HEK293 (cell line): ENCODE measurements at regions of chr7 and their contacts with region 1.

Region 1: GRCh38 chr7:38335492-38336147 is 62.2 kb upstream of the TARP start:
- H3K4me3 ChIP-seq: no peak overlapping the region
- H3K27ac ChIP-seq: no peak overlapping the region
- H3K4me1 ChIP-seq: no peaks in the 10 kb centered on the region
- CTCF ChIP-seq: peak; percentile 77

Region 2: DNA sequence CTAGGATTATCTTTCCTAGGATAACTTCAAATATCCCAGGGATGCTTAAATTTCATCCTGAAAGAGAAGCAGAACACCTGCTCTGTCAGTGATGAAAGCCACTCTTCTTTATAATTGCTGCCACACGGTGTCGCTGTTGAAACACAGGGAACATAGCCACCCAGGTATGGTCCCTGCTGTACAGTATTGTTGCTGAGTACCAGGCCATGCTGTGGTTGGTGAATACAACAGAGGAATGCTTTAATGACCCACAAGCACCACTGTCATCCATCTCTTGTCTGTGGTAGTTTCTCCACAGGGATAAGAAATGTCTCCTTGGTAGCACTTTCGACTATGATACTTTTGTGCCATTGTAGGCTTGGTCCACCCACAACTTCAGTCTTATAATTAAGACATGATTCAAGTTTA is 228.1 kb before region 1 on chr7:
- CTCF ChIA-PET with region 1: interaction called, 28 read pairs
- POLR2A ChIA-PET with region 1: no interaction called
- H3K4me3 ChIP-seq: no peak overlapping the region
- H3K27ac ChIP-seq: no peak overlapping the region
- H3K4me1 ChIP-seq: no peaks in the 10 kb centered on the region
- CTCF ChIP-seq: no peak

Region 3: DNA sequence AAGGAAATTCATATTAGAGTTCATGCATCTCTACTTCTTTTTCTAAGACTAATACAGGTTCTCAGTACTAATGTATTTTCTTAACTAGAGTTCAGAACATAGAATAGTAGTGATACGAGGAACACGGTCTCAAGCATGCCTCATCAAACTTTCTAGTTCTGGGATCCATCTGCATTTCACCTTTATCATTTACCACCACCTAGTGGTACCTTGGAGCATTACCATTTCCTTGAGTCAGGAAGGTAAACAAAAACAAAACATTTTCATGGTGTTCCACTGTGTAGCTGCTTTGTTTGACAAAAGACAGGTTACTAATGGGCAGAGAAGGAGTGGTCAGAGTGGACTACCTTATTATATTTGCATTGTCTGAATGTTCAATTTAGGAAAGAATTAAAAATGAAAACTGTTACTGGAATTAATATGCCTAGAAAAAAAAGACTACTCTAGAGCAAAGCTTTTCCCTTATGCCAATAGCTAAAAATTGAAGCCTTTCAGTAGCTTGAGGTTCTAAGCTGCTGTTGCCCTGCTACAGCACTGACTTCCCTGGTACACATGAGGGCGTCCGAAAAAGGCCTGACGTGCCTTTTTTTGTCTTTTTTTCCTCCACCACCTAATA is 113.0 kb before region 1 on chr7:
- CTCF ChIA-PET with region 1: interaction called, 34 read pairs
- POLR2A ChIA-PET with region 1: no interaction called
- H3K4me3 ChIP-seq: no peak overlapping the region
- H3K27ac ChIP-seq: no peak overlapping the region
- H3K4me1 ChIP-seq: no peaks in the 10 kb centered on the region
- CTCF ChIP-seq: 0 out of 2 replicates have a peak, but pooled peaks have one; percentile 27

Region 4: DNA sequence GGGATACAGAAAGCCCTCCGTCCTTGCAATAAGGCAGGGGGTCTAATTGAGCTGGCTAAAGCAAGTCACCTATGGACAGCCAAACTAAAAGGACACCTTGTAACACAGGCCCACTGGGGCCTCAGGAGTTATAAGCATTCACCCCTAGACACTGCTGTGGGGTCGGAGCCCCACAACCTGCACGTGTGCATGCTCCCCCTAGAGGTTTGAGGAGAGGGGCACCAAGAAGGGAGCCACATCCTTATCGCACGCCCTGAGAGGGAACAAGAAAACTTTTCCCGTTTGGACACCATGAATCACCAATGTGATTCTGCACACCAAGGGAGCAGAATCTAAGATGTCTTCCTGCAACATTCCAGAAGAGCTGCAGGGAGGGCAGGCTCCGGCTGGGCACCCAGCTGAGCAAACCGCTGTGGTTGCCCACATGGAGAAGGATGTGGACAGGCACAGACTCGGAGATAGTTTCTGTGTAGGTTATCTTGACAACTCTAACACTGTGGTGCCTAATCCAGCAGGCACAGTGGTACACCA is 44.4 kb before region 1 on chr7:
- CTCF ChIA-PET with region 1: interaction called, 10 read pairs
- POLR2A ChIA-PET with region 1: no interaction called
- H3K4me3 ChIP-seq: no peak overlapping the region
- H3K27ac ChIP-seq: no peak overlapping the region
- H3K4me1 ChIP-seq: no peaks in the 10 kb centered on the region
- CTCF ChIP-seq: no peak

Region 5: GRCh38 chr7:38311329-38311937 is 24.2 kb before region 1 on chr7:
- CTCF ChIA-PET with region 1: interaction called, 18 read pairs
- POLR2A ChIA-PET with region 1: no interaction called
- H3K4me3 ChIP-seq: peak overlapping the region; percentile 47
- H3K27ac ChIP-seq: no peak overlapping the region; the same call in 1 of the 2 replicates
- H3K4me1 ChIP-seq: peaks cover 6% of the 10 kb centered on the region
- CTCF ChIP-seq: no peak

Region 6: GRCh38 chr7:38351601-38352000 is 16.0 kb after region 1 on chr7:
- CTCF ChIA-PET with region 1: interaction called, 16 read pairs
- POLR2A ChIA-PET with region 1: no interaction called
- H3K4me3 ChIP-seq: no peak overlapping the region
- H3K27ac ChIP-seq: no peak overlapping the region
- H3K4me1 ChIP-seq: no peaks in the 10 kb centered on the region
- CTCF ChIP-seq: no peak

Region 7: DNA sequence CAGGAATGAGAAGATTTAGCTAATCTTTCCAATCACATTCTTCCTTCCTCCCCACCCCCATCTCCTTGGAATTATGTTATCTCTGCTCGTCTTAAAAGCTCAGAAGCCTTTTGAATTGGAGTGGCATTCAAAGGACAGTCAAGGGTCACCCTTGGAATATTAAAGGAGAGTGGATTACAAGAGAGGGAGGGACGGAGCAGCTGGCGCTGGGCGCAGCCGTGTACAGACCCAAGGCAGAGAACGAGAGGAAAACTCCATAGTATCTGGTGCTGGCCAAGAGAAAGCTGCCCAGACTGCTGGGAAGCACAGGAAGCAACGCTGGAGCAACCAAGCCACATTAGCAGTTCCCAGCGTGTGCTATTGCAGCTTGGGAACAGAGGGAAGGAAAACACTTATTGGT is 737.8 kb after region 1 on chr7:
- CTCF ChIA-PET with region 1: no interaction called
- POLR2A ChIA-PET with region 1: interaction called, 10 read pairs
- H3K4me3 ChIP-seq: no peak overlapping the region
- H3K27ac ChIP-seq: no peak overlapping the region
- H3K4me1 ChIP-seq: no peaks in the 10 kb centered on the region
- CTCF ChIP-seq: no peak